GM12878 (cell line): ENCODE measurements at regions of chr3 and their contacts with region 1.

Region 1: GRCh38 chr3:105827959-105828358 is 40.9 kb downstream of the CBLB start:
- DNase-seq: no peak
- ATAC-seq: peak; percentile 23
- H3K4me3 ChIP-seq: no peak overlapping the region
- H3K27ac ChIP-seq: peak overlapping the region; percentile 81
- H3K4me1 ChIP-seq: peaks cover 44% of the 10 kb centered on the region
- H3K27me3 ChIP-seq: no peaks in the 10 kb centered on the region
- CTCF ChIP-seq: no peak
- EP300 ChIP-seq: no peak
- POLR2A ChIP-seq: no peak
- RAD21 ChIP-seq: 0 out of 2 replicates have a peak, but pooled peaks have one; percentile 6

Region 2: DNA sequence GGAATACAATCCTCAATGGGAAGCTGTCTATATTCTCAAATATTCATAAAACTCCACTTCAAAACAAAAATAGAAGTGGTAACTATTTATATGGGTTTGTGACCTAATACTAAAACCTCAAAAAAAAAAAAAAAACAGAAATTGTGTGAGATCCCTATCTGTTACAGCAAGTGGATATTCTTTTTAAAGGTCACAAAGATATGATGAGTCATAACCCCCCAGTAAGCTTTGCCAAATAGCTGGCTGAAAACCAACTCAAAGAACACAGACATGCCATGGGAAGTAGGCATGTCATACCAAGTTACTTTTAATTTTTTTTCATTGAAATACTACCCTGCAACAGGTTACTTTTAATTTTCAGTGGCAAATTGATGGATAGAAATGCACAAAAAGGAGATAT is 21.6 kb before region 1 on chr3:
- CTCF ChIA-PET with region 1: interaction called, 11 read pairs
- POLR2A ChIA-PET with region 1: interaction called, 13 read pairs
- RAD21 ChIA-PET with region 1: interaction called, 50 read pairs
- SMC1A ChIA-PET with region 1: interaction called, 154 read pairs
- in situ Hi-C with region 1: no loop called
- intact Hi-C with region 1: loop called (anchors 2 kb)
- DNase-seq: no peak
- ATAC-seq: peak; percentile 64
- H3K4me3 ChIP-seq: no peak overlapping the region
- H3K27ac ChIP-seq: no peak overlapping the region
- H3K4me1 ChIP-seq: peaks cover 18% of the 10 kb centered on the region
- H3K27me3 ChIP-seq: no peaks in the 10 kb centered on the region
- CTCF ChIP-seq: no peak
- EP300 ChIP-seq: peak in 1 of 2 experiments; percentile 39; a peak in 2 of 4 replicates
- POLR2A ChIP-seq: no peak
- RAD21 ChIP-seq: no peak

Region 3: DNA sequence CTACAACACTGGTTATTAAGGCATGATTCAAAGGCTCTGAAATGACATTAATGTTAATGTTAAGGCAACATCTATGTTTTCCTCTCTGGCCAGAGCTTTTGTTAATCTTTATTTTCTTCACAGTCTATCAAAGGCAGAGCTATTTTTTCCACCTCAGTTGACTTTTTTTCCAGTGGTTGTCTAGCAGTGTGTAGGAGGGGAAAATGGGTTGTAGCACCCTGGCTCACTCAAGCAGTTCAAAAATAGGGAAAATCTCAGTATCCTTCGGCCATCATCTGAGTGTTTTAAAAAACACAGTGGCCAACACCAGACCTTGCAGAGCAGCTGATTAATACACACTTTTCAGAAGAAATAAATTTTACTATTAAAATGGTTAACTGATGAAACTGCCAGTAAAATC is 19.5 kb after region 1 on chr3:
- CTCF ChIA-PET with region 1: interaction called, 3 read pairs
- POLR2A ChIA-PET with region 1: no interaction called
- RAD21 ChIA-PET with region 1: interaction called, 6 read pairs
- SMC1A ChIA-PET with region 1: interaction called, 11 read pairs
- in situ Hi-C with region 1: no loop called
- intact Hi-C with region 1: no loop called
- DNase-seq: no peak
- ATAC-seq: peak; percentile 10; the same call in 1 of the 3 replicates
- H3K4me3 ChIP-seq: no peak overlapping the region
- H3K27ac ChIP-seq: no peak overlapping the region
- H3K4me1 ChIP-seq: no peaks in the 10 kb centered on the region
- H3K27me3 ChIP-seq: no peaks in the 10 kb centered on the region
- CTCF ChIP-seq: no peak
- EP300 ChIP-seq: no peak
- POLR2A ChIP-seq: no peak
- RAD21 ChIP-seq: no peak

Region 4: DNA sequence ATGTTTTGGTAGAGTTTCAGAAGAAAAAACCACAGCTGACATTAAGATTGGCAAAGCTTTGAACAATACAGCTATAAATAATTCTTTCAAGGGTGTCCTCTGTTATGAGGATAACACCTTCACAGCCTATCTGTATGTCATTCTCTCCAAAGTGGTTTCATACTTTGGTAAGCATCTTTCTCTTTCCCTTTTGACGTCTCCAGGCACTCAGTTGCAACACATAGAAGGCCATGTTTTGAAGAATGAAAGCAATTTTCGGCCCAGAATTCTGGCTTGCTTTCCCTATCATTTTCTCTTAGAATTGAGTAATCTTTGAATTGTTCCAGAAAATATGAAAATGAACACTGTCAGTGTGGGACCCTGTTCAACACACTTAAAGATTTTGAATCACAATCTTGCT is 240.8 kb after region 1 on chr3:
- CTCF ChIA-PET with region 1: no interaction called
- POLR2A ChIA-PET with region 1: no interaction called
- RAD21 ChIA-PET with region 1: interaction called, 11 read pairs
- SMC1A ChIA-PET with region 1: no interaction called
- in situ Hi-C with region 1: no loop called
- intact Hi-C with region 1: no loop called
- DNase-seq: no peak
- ATAC-seq: peak; percentile 91
- H3K4me3 ChIP-seq: no peak overlapping the region
- H3K27ac ChIP-seq: peak overlapping the region; percentile 20; the same call in 1 of the 2 replicates
- H3K4me1 ChIP-seq: no peaks in the 10 kb centered on the region
- H3K27me3 ChIP-seq: no peaks in the 10 kb centered on the region
- CTCF ChIP-seq: no peak
- EP300 ChIP-seq: no peak; a peak in 1 of 4 replicates
- POLR2A ChIP-seq: no peak
- RAD21 ChIP-seq: no peak